MCF 10A (cell line): ENCODE measurements at regions of chr3 and their contacts with region 1.

Region 1: DNA sequence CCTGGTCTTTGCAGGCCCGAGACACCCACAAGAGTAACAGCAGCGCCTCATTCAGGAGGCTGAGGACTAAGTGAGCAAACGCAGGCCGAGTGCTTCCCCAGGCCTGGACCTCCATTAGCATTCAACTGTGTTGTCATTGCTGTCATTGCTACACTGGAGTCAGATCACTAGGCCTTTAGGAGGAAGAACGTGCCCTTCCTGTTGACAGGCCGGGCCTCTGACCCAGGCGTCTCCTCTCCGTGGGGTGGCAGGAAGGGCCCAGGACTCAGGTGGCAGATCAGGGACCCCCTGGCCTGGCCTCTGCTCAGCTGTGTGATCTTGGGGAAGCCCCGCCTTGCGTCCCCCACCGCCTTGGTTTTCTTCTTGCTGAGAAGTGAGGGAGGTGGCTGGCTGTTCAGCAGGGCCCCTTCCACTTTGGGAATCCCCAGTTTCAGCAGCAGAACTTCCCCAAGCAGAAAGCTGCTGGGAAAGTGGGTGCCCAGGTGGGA is 19.1 kb downstream of the ZDHHC19 start:
- DNase-seq: no peak
- H3K4me3 Mint-ChIP-seq: no peak overlapping the region
- H3K27ac Mint-ChIP-seq: no peak overlapping the region
- H3K4me1 Mint-ChIP-seq: no peaks in the 10 kb centered on the region
- H3K27me3 Mint-ChIP-seq: no peaks in the 10 kb centered on the region
- CTCF ChIP-seq: no peak

Region 2: GRCh38 chr3:196023947-196024346 is 168.1 kb before region 1 on chr3:
- CTCF ChIA-PET with region 1: interaction called, 5 read pairs
- POLR2A ChIA-PET with region 1: no interaction called
- intact Hi-C with region 1: loop called (anchors 2 kb)
- DNase-seq: no peak
- H3K4me3 Mint-ChIP-seq: no peak overlapping the region
- H3K27ac Mint-ChIP-seq: no peak overlapping the region
- H3K4me1 Mint-ChIP-seq: no peaks in the 10 kb centered on the region
- H3K27me3 Mint-ChIP-seq: peaks cover 47% of the 10 kb centered on the region
- CTCF ChIP-seq: no peak

Region 3: GRCh38 chr3:196081791-196082618 is 110.1 kb before region 1 on chr3 and contains the start of gene TFRC:
- CTCF ChIA-PET with region 1: interaction called, 171 read pairs
- POLR2A ChIA-PET with region 1: interaction called, 4 read pairs
- intact Hi-C with region 1: no loop called
- DNase-seq: peak; percentile 92
- H3K4me3 Mint-ChIP-seq: peak within 1 kb of the TSS; percentile 94
- H3K27ac Mint-ChIP-seq: peak within 1 kb of the TSS; percentile 87
- H3K4me1 Mint-ChIP-seq: peaks cover 6% of the 10 kb centered on the region
- H3K27me3 Mint-ChIP-seq: no peaks in the 10 kb centered on the region
- CTCF ChIP-seq: no peak
- total RNA-seq, gene TFRC: 72.9 and 108 TPM in 2 replicates

Region 4: DNA sequence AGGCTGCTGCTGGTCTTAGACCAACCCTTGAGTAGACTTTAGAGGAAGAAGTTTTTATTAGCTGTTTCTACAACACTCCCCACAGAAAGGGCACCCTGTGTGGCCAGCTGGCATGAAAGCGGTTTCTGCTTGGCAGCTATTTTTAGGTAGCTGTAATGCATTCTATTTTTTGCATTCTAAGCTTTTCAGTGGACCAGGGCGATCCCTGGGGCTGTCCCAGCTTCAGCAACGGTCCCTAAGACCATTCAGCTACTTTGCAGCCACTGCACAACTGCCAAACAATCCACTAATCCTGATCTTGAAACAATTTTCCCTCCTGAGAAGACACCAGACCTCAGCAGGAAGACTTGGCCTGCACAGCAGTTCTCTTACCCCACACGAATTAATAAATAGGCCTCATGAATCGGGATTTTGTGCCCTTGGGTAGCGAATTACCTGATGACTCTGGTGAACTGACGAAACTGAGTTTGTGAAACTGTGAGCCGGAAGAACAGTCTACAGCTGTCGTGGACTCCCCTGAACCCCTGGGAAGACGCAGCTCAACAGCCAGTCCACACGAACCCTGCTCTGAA is 95.6 kb before region 1 on chr3:
- CTCF ChIA-PET with region 1: interaction called, 11 read pairs
- POLR2A ChIA-PET with region 1: no interaction called
- intact Hi-C with region 1: no loop called
- DNase-seq: no peak
- H3K4me3 Mint-ChIP-seq: no peak overlapping the region
- H3K27ac Mint-ChIP-seq: no peak overlapping the region
- H3K4me1 Mint-ChIP-seq: no peaks in the 10 kb centered on the region
- H3K27me3 Mint-ChIP-seq: no peaks in the 10 kb centered on the region
- CTCF ChIP-seq: no peak

Region 5: GRCh38 chr3:196149831-196150521 is 42.1 kb before region 1 on chr3:
- CTCF ChIA-PET with region 1: no interaction called
- POLR2A ChIA-PET with region 1: no interaction called
- intact Hi-C with region 1: no loop called
- DNase-seq: no peak
- H3K4me3 Mint-ChIP-seq: no peak overlapping the region
- H3K27ac Mint-ChIP-seq: no peak overlapping the region
- H3K4me1 Mint-ChIP-seq: no peaks in the 10 kb centered on the region
- H3K27me3 Mint-ChIP-seq: no peaks in the 10 kb centered on the region
- CTCF ChIP-seq: no peak

Region 6: GRCh38 chr3:196789759-196790419 is 597.8 kb after region 1 on chr3:
- CTCF ChIA-PET with region 1: no interaction called
- POLR2A ChIA-PET with region 1: no interaction called
- intact Hi-C with region 1: no loop called
- DNase-seq: peak; percentile 13
- H3K4me3 Mint-ChIP-seq: no peak overlapping the region
- H3K27ac Mint-ChIP-seq: no peak overlapping the region
- H3K4me1 Mint-ChIP-seq: peaks cover 19% of the 10 kb centered on the region
- H3K27me3 Mint-ChIP-seq: no peaks in the 10 kb centered on the region
- CTCF ChIP-seq: no peak